ENCODE measurements at regions of chr6 and their contacts with region 1.

Region 1: DNA sequence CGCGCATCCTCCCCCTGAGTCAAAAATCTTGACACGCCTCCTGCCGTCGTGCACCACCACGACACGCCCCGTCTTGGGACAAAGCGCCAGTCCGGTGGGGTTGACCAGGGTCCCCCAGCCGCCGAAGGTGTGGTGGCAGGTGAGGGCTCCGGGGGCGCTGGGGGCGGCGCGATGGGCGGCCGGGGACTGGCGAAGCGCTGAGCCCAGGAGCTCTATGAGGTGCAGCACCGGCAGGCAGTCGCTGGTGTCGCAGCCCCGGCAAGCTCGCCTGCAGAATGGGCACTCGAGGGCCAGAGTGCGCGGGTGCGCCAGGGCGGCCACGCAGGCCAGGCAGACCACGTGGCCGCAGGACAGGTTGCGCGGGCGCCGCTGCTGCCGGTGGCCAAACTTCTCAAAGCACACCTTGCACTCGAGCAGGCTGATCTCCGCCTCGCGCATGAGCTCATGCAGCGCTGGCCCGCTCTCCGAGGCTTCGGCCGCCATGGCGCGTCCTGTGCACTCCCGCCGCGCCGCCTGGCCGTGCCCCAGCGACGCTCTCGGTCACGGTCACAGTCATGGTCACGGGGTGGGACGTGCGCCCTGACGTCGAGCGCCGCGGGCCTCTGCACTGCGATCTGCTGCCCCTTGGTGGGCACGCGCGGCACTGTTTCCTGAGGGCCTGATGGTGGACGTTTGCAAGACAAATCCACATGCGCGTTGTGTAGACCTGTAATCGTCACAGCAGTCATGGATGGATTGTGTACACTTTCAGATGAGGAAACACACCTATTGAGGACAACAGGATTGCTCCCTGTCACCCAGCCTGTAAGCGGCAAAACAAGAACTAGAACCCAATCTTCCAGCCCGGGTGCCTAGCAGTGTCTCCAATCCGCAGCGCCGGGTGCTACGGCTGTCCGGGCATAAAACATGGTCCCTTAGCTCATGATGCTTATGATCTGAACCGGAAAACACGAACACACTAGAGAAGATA is at the start of gene NHLRC1:
- DNase-seq: peak; percentile 87 to 90
- ATAC-seq: peak; percentile 99 to 100 (median 99)
- H3K4me3 ChIP-seq: peak within 1 kb of the TSS; percentile 27 to 68 (median 61)
- H3K27ac ChIP-seq: peak within 1 kb of the TSS in 8 of 10 donors; percentile 18 to 64 (median 40)
- H3K4me1 ChIP-seq: peaks cover 3 to 21% (median 15%) of the 10 kb centered on the region in 9 donors
- H3K27me3 ChIP-seq: no peaks in the 10 kb centered on the region
- CTCF ChIP-seq: peak; percentile 86 to 96 (median 93)
- total RNA-seq, gene NHLRC1: 0.92 to 2.5 (median 1.6) TPM

Region 2: GRCh38 chr6:17156112-17156921 is 966.1 kb before region 1 on chr6:
- intact Hi-C with region 1: loop called in 2 of 10 experiments (anchors 5 to 10 kb)
- DNase-seq: peak in 1 of 2 donors; percentile 74
- ATAC-seq: peak in 4 of 8 donors; percentile 47 to 76 (median 51)
- H3K4me3 ChIP-seq: no peak overlapping the region
- H3K27ac ChIP-seq: no peak overlapping the region
- H3K4me1 ChIP-seq: no peaks in the 10 kb centered on the region
- H3K27me3 ChIP-seq: peaks cover 0 to 10% (median 0%) of the 10 kb centered on the region in 7 donors
- CTCF ChIP-seq: peak; percentile 71 to 92 (median 84)

Region 3: DNA sequence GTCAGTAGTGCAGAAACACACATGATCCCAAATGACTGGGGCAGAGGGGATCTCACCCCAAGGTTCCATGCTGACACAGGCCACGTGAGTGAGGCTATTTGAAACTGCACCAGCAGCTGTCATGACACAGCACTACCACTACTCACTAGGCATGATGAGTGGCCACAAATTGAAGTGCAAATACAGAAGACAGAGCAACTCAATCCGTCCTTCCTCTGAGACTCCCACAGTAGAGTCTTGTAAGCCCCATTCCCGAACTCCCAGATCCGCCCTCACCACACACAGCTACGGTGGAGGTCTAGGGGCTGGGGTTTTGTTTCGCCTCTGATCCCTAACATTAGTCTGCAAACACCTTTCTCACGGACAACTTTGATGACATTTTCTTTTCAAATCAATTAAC is 302.4 kb before region 1 on chr6:
- intact Hi-C with region 1: loop called in 2 of 10 experiments (anchors 5 to 10 kb)
- DNase-seq: no peak
- ATAC-seq: peak in 4 of 8 donors; percentile 31 to 61 (median 52)
- H3K4me3 ChIP-seq: no peak overlapping the region
- H3K27ac ChIP-seq: no peak overlapping the region
- H3K4me1 ChIP-seq: no peaks in the 10 kb centered on the region
- H3K27me3 ChIP-seq: no peaks in the 10 kb centered on the region
- CTCF ChIP-seq: peak in 1 of 9 donors; percentile 15

Region 4: GRCh38 chr6:17831135-17831534 is 291.3 kb before region 1 on chr6:
- intact Hi-C with region 1: loop called in 8 of 10 experiments (anchors 2 to 10 kb)
- DNase-seq: peak in 1 of 2 donors; percentile 54
- ATAC-seq: peak; percentile 67 to 92 (median 88)
- H3K4me3 ChIP-seq: no peak overlapping the region
- H3K27ac ChIP-seq: peak overlapping the region in 5 of 10 donors; percentile 20 to 66 (median 41)
- H3K4me1 ChIP-seq: peaks cover 0 to 17% (median 11%) of the 10 kb centered on the region in 9 donors
- H3K27me3 ChIP-seq: no peaks in the 10 kb centered on the region
- CTCF ChIP-seq: peak in 1 of 9 donors; percentile 10

Region 5: DNA sequence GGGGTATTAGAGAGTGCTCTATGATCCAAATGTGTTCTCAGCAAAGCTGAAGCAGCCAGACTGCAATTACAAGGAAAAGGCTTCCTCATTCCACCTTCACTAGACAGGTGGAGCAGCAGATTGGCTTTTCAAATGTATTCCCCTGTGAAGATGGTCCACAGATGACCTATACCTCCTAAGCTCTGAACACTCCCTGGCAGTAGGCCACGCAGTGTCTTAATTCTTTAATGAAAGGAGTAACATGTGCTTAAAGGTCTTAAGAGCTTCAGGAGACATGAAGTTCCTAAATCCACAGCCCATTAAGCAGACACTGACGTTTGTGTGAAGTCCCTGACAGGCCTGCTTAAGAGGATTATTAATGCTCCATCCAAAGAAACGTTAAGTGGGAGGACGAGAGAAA is 276.8 kb before region 1 on chr6:
- intact Hi-C with region 1: loop called in 2 of 10 experiments (anchors 5 to 10 kb)
- DNase-seq: no peak
- ATAC-seq: peak in 2 of 8 donors; percentile 14 to 37
- H3K4me3 ChIP-seq: no peak overlapping the region
- H3K27ac ChIP-seq: no peak overlapping the region
- H3K4me1 ChIP-seq: peaks cover 0 to 4% (median 0%) of the 10 kb centered on the region in 9 donors
- H3K27me3 ChIP-seq: no peaks in the 10 kb centered on the region
- CTCF ChIP-seq: peak in 3 of 9 donors; percentile 14 to 23 (median 15)

Measured in heart right ventricle (tissue), 16 donors.